ENCODE measurements at regions of chr12 and their contacts with region 1.

Region 1: GRCh38 chr12:121828826-121829225 is 25.0 kb downstream of the SETD1B start:
- DNase-seq: no peak
- ATAC-seq: no peak
- H3K4me3 ChIP-seq: no peak overlapping the region
- H3K4me3 Mint-ChIP-seq: no peak overlapping the region
- H3K27ac ChIP-seq: no peak overlapping the region
- H3K27ac Mint-ChIP-seq: peak overlapping the region in 1 of 2 donors; percentile 52
- H3K4me1 ChIP-seq: no peaks in the 10 kb centered on the region
- H3K4me1 Mint-ChIP-seq: peaks cover 9 to 24% (median 9%) of the 10 kb centered on the region in 3 donors
- H3K27me3 ChIP-seq: no peaks in the 10 kb centered on the region
- H3K27me3 Mint-ChIP-seq: no peaks in the 10 kb centered on the region

Region 2: GRCh38 chr12:121005346-121005815 is 823.4 kb before region 1 on chr12:
- CTCF ChIA-PET with region 1: no interaction called
- POLR2A ChIA-PET with region 1: interaction called in 1 of 2 experiments, 10 read pairs
- DNase-seq: peak in 28 of 35 experiments; percentile 10 to 64 (median 31)
- ATAC-seq: peak in 3 of 4 experiments; percentile 43 to 63 (median 52)
- H3K4me3 ChIP-seq: no peak overlapping the region
- H3K4me3 Mint-ChIP-seq: no peak overlapping the region
- H3K27ac ChIP-seq: no peak overlapping the region
- H3K27ac Mint-ChIP-seq: no peak overlapping the region
- H3K4me1 ChIP-seq: no peaks in the 10 kb centered on the region
- H3K4me1 Mint-ChIP-seq: peaks cover 0 to 2% (median 0%) of the 10 kb centered on the region in 3 donors
- H3K27me3 ChIP-seq: no peaks in the 10 kb centered on the region
- H3K27me3 Mint-ChIP-seq: no peaks in the 10 kb centered on the region

Region 3: DNA sequence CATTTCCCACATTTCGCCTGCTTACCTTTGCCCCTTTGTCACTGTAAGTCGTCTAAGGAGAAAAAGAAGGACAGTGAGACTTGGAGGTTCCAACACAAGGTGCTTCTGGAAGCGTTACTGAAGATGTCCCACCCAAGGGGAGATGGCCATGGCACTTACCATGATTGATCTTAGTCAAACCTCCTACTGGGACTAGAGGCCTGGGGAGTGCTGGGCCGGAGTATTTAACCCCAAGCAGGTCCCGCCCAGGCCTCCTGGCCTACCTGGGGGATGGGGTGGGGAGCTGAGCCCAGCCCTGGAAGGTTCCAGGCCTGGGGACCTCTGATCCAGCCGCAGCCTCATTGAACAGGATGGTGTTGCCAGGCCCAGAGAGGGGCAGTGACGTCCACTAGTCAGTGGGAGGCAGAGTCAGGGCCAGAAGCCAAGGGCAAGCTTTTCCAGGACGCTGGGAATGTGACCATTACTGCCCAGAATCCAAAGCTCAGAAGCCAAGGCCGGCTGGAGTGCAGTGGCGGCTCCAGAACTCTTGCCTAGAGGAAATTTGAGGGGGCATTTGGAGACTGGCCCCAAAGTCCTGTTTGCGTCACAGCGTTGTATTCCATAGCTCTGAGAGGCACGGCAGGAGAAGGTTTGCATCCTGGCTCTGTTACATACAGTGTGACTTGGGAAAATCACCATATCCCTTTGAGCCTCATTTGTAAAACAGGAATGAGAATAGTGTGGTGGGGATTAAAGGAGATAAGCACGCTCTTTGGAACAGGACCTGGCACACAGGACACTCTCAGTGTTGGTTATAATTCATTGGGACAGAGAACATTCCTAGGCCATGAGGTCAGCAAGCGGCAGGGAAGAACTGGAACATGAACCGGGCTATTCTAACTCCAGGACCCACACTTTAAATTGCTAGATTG is 30.1 kb after region 1 on chr12 and contains the start of gene HPD:
- CTCF ChIA-PET with region 1: no interaction called
- POLR2A ChIA-PET with region 1: no interaction called
- DNase-seq: no peak
- ATAC-seq: no peak
- H3K4me3 ChIP-seq: no peak within 1 kb of the TSS
- H3K4me3 Mint-ChIP-seq: no peak within 1 kb of the TSS
- H3K27ac ChIP-seq: no peak within 1 kb of the TSS
- H3K27ac Mint-ChIP-seq: no peak within 1 kb of the TSS
- H3K4me1 ChIP-seq: no peaks in the 10 kb centered on the region
- H3K4me1 Mint-ChIP-seq: no peaks in the 10 kb centered on the region
- H3K27me3 ChIP-seq: peaks cover 0 to 11% of the 10 kb centered on the region in 2 experiments
- H3K27me3 Mint-ChIP-seq: no peaks in the 10 kb centered on the region
- total RNA-seq, gene HPD: 0.39 to 0.92 (median 0.58) TPM in 3 of 5 donors, not detected in the others